Caco-2 (cell line): ENCODE measurements at regions of chrX and their contacts with region 1.

Region 1: DNA sequence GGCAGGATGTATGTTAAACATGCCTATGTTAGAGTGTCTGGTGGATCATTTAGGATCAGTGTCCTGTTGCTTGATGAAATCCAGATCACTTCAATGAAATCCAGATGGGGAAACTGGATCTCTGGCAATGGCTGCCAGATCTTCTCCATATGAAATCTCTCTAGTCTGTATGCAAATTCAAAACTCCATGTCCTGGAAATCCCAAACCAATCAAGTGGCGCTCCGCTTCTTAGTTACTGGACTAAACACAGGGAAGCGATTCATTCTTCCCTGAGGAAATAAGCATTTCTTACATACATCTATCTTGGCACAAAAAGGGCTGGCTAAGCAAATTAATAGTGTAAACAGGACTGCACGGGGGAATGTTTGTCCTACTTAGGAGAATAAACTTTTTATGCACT is 94.9 kb downstream of the HDAC8 start:
- DNase-seq: no peak
- H3K4me3 ChIP-seq: no peak overlapping the region
- H3K4me3 Mint-ChIP-seq: no peak overlapping the region
- H3K27ac Mint-ChIP-seq: no peak overlapping the region
- H3K4me1 ChIP-seq: peaks cover 13% of the 10 kb centered on the region
- H3K4me1 Mint-ChIP-seq: peaks cover 13% of the 10 kb centered on the region
- H3K27me3 ChIP-seq: no peaks in the 10 kb centered on the region
- H3K27me3 Mint-ChIP-seq: no peaks in the 10 kb centered on the region
- CTCF ChIP-seq: no peak

Region 2: GRCh38 chrX:72294497-72294896 is 183.3 kb before region 1 on chrX:
- CTCF ChIA-PET with region 1: no interaction called
- POLR2A ChIA-PET with region 1: no interaction called
- intact Hi-C with region 1: no loop called
- DNase-seq: no peak
- H3K4me3 ChIP-seq: no peak overlapping the region
- H3K4me3 Mint-ChIP-seq: no peak overlapping the region
- H3K27ac Mint-ChIP-seq: no peak overlapping the region
- H3K4me1 ChIP-seq: no peaks in the 10 kb centered on the region
- H3K4me1 Mint-ChIP-seq: peaks cover 2% of the 10 kb centered on the region
- H3K27me3 ChIP-seq: no peaks in the 10 kb centered on the region
- H3K27me3 Mint-ChIP-seq: peaks cover 5% of the 10 kb centered on the region
- CTCF ChIP-seq: no peak

Region 3: GRCh38 chrX:72306851-72307645 is 170.7 kb before region 1 on chrX:
- CTCF ChIA-PET with region 1: no interaction called
- POLR2A ChIA-PET with region 1: no interaction called
- intact Hi-C with region 1: loop called (anchors 10 kb)
- DNase-seq: peak; percentile 45 to 51
- H3K4me3 ChIP-seq: peak overlapping the region; percentile 57
- H3K4me3 Mint-ChIP-seq: peak overlapping the region; percentile 82
- H3K27ac Mint-ChIP-seq: no peak overlapping the region
- H3K4me1 ChIP-seq: no peaks in the 10 kb centered on the region
- H3K4me1 Mint-ChIP-seq: no peaks in the 10 kb centered on the region
- H3K27me3 ChIP-seq: peaks cover 1% of the 10 kb centered on the region
- H3K27me3 Mint-ChIP-seq: peaks cover 14% of the 10 kb centered on the region
- CTCF ChIP-seq: no peak